MCF 10A (cell line): ENCODE measurements at regions of chr20 and their contacts with region 1.

Region 1: GRCh38 chr20:50115591-50116372 is 2.8 kb upstream of the UBE2V1 start:
- DNase-seq: peak; percentile 97
- H3K4me3 Mint-ChIP-seq: peak overlapping the region; percentile 74
- H3K27ac Mint-ChIP-seq: peak overlapping the region; percentile 89
- H3K4me1 Mint-ChIP-seq: peaks cover 39% of the 10 kb centered on the region
- H3K27me3 Mint-ChIP-seq: no peaks in the 10 kb centered on the region
- CTCF ChIP-seq: no peak

Region 2: DNA sequence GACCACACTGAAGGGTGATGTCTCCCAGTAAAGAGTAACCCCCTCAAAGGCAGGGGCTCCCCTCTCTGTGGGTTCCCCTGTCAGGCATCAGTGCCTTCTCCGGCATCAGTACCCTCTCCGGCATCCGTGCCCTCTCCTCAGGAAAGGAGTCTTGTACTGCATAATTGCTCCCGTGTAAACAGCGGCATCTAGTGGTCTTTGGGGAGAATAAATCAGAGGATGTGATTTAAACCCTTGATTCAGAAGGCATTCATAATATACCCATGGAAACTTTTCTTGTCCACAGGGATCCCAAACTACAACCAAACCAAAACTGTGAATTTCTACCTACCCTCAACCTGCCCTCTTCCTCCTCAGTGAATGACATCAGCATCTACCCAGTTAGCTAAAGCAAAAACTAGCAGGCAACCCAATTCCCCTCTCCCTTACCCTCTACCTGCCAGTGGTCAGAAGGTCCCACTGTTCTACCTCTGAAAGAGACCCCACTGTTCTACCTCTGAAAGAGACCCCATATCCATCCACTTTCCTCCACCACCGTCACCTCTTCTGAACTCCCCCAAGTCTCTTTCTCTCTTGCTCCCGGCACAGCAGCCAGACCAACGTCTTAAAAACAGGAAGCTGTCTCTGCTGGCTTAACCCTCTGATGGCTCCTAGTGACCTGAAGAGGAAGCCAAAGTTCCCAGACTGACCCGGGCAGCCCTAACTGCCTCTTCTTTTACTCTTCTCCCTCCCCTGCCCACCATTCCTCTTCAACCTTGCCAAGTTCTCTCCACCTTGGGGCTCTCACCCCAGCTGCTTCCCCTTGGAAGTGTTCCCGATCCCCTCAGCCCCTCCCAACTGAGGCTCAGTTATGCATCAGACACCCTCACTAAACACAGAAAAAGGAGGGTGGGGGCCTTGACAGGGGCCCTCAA is 30.1 kb before region 1 on chr20:
- CTCF ChIA-PET with region 1: interaction called, 36 read pairs
- POLR2A ChIA-PET with region 1: interaction called, 177 read pairs
- intact Hi-C with region 1: no loop called
- DNase-seq: peak; percentile 75
- H3K4me3 Mint-ChIP-seq: peak overlapping the region; percentile 8
- H3K27ac Mint-ChIP-seq: peak overlapping the region; percentile 77
- H3K4me1 Mint-ChIP-seq: peaks cover 33% of the 10 kb centered on the region
- H3K27me3 Mint-ChIP-seq: no peaks in the 10 kb centered on the region
- CTCF ChIP-seq: peak; percentile 60

Region 3: GRCh38 chr20:50101281-50101680 is 14.5 kb before region 1 on chr20:
- CTCF ChIA-PET with region 1: interaction called, 11 read pairs
- POLR2A ChIA-PET with region 1: interaction called, 104 read pairs
- intact Hi-C with region 1: no loop called
- DNase-seq: no peak
- H3K4me3 Mint-ChIP-seq: no peak overlapping the region
- H3K27ac Mint-ChIP-seq: no peak overlapping the region
- H3K4me1 Mint-ChIP-seq: peaks cover 31% of the 10 kb centered on the region
- H3K27me3 Mint-ChIP-seq: no peaks in the 10 kb centered on the region
- CTCF ChIP-seq: no peak

Region 4: GRCh38 chr20:50146732-50147662 is 31.2 kb after region 1 on chr20:
- CTCF ChIA-PET with region 1: interaction called, 408 read pairs
- POLR2A ChIA-PET with region 1: interaction called, 386 read pairs
- intact Hi-C with region 1: loop called (anchors 2 kb)
- DNase-seq: peak; percentile 81
- H3K4me3 Mint-ChIP-seq: peak overlapping the region; percentile 61
- H3K27ac Mint-ChIP-seq: peak overlapping the region; percentile 96
- H3K4me1 Mint-ChIP-seq: peaks cover 65% of the 10 kb centered on the region
- H3K27me3 Mint-ChIP-seq: no peaks in the 10 kb centered on the region
- CTCF ChIP-seq: no peak

Region 5: GRCh38 chr20:50645253-50646118 is 529.7 kb after region 1 on chr20:
- CTCF ChIA-PET with region 1: no interaction called
- POLR2A ChIA-PET with region 1: no interaction called
- intact Hi-C with region 1: no loop called
- DNase-seq: peak; percentile 93
- H3K4me3 Mint-ChIP-seq: peak overlapping the region; percentile 52
- H3K27ac Mint-ChIP-seq: peak overlapping the region; percentile 93
- H3K4me1 Mint-ChIP-seq: peaks cover 14% of the 10 kb centered on the region
- H3K27me3 Mint-ChIP-seq: no peaks in the 10 kb centered on the region
- CTCF ChIP-seq: no peak